ENCODE measurements at regions of chr18 and their contacts with region 1.

Region 1: GRCh38 chr18:6920099-6920899 is 190.8 kb downstream of the ARHGAP28 start:
- DNase-seq: peak; percentile 78
- ATAC-seq: peak; percentile 74
- H3K4me3 Mint-ChIP-seq: no peak overlapping the region
- H3K27ac Mint-ChIP-seq: no peak overlapping the region
- H3K4me1 Mint-ChIP-seq: peaks cover 2% of the 10 kb centered on the region
- H3K27me3 Mint-ChIP-seq: no peaks in the 10 kb centered on the region
- CTCF ChIP-seq: peak; percentile 65

Region 2: DNA sequence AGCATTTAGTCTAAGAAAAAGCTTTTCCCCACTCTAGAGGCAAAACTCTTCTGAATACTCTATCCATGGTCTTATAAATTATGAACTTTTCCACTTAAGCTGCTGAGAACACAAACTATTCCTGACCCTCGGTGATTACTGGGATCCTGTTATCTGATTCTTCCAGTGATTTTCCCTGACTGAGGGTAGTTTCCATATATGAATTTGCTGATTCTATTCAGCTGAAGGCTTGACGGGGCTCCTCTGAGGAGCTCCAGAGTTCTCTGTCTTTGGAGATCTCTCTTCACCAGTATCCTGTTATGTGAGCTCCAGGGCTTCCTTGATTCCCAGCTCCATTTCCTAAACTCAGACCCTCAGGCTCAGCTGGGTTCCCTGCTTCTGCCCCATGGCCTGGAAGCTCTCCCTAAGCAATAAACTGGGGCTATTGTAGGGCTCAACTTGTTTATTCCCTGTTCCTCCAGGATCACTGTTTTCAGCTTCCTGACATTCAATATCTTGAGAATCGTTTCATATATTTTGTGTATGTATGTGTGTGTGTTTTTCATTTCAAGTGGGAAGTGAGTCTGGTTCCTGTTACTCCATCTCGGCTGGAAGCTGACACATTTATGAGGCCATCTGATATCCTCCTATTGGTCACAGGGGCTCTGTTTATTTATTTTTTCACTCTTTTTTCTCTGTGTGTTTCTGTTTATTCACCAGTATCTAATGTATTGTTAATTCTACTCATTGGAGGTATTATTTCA is 112.6 kb before region 1 on chr18:
- CTCF ChIA-PET with region 1: no interaction called
- POLR2A ChIA-PET with region 1: no interaction called
- DNase-seq: no peak
- ATAC-seq: no peak
- H3K4me3 Mint-ChIP-seq: no peak overlapping the region
- H3K27ac Mint-ChIP-seq: no peak overlapping the region
- H3K4me1 Mint-ChIP-seq: peaks cover 14% of the 10 kb centered on the region
- H3K27me3 Mint-ChIP-seq: no peaks in the 10 kb centered on the region
- CTCF ChIP-seq: no peak

Region 3: DNA sequence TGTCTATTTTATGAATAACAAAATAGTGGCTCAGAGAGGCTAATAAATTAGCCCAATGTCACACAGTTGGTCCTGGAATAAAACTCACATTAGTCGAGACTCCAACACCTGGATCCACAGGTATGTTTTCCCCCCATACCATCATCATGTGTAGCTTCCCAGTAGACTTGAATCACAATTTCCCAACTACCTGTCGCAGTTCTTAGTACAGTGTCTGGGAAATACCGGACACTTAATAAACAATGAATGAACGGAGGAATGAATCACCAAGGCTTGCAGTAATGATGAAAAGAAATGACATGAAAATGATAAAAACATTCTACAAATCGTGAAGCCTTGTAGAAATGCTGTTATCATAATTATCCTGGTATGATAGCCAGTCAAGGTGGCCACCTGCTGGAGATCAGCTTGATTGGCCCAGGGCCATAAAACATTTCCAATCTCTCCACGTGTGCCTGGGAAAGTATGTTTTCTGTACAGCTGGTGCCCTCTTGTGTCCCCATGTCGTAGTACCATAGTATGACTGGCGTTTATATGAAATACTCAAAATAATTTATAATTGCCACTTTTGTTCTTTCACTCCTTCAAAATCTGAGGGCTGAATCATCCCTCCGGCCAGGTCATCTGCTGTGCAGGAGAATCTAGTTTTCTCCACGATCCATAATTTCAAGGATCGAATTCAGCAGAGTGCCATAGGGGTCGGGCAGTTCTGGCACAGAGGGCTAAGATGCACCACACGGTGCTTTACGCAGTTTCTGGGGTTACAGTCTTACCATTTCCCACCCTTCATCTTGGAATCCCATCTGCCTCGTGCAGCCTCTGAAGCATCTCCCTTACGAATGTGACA is 101.9 kb after region 1 on chr18:
- CTCF ChIA-PET with region 1: interaction called, 25 read pairs
- POLR2A ChIA-PET with region 1: no interaction called
- DNase-seq: no peak
- ATAC-seq: peak; percentile 48; the same call in 1 of the 2 replicates
- H3K4me3 Mint-ChIP-seq: no peak overlapping the region
- H3K27ac Mint-ChIP-seq: no peak overlapping the region
- H3K4me1 Mint-ChIP-seq: 0 out of 2 replicates have a peak, but pooled peaks cover 4% of the 10 kb centered on the region
- H3K27me3 Mint-ChIP-seq: no peaks in the 10 kb centered on the region
- CTCF ChIP-seq: no peak